ENCODE measurements at regions of chrX and their contacts with region 1.

Region 1: DNA sequence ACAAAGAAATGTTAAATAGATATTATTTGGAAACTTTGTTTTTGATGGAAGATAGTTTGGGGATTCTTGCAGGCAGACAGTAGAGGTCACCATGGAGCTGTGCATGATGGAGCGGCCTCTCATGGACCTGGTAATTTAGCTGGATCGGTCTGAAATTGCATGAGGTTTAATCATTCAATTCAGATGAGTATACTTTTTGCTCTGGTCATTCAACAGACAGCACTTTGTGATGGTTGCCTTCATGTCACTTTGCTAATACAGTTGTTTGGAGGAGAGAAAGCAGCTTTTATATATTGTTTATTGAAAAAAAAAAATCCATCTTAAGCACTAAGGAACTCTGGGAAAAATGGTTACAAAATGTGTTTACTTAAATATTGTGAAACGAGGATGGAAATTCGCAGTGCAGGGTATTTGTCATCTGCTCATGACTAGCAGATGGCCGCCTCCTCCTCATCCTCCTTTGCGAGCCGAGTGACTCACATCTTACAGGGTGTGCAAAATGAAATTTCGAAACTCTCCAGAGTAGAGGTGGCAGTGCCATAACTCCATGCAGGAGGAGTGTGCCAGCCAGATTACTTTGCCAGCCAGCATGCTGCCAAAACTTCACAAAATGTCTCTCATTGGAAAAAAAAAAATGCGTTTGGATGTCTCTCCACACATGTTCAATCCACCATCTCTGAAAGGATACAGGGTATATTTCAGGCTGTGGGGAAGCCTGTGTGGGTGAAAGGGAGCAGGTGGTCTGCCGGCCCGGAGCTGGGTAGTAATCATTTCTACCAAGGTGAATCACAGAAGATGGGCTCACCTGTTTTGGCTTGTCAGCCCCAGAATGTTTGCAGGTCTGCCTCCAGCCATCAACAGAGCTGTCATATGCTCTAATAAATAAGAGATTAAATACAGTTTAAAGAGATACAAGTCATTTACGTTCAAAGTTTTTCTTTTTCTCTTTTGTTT is 314.9 kb upstream of the DIPK2B start:
- DNase-seq: no peak

Region 2: DNA sequence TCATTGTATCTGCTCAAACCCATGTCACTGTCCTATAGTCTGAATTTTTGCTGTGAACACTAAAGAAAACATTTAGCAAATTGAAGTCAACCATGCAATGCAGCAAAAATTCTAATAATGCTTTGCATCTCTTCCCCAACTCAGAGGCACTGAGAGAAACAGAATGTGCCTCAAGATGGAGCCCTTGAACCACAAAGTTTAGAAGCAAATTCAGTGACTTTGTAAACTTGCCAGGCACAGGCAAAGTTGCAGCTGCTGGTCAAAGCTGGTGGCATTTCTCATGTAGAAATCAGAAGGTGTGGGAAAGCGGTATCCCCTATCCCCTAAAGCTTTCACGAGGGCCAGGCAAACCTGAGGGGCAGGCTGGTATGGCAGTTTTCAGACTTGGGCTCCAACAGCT is 193.2 kb before region 1 on chrX:
- intact Hi-C with region 1: loop called (anchors 5 kb)
- DNase-seq: no peak

Region 3: GRCh38 chrX:45422216-45422925 is 93.2 kb before region 1 on chrX:
- intact Hi-C with region 1: no loop called
- DNase-seq: no peak

Region 4: DNA sequence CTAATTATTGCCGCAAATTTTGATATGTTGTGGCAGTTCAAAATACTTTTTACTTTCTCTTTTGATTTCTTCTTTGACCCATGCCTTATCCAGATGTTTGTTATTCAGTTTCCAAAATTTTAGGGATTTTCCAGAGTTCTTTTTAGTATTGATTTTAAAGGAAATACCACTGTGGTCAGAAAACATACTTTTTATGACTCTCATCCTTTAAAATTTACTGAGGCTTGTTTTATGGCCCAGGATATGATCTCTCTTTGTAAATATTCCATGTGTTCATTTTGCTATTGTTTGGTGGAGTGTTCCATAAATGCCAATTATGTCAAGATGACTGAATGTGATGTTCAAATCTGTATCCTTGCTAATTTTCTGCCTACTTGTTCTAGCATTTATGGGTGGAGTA is 42.6 kb before region 1 on chrX:
- intact Hi-C with region 1: no loop called
- DNase-seq: no peak

Region 5: DNA sequence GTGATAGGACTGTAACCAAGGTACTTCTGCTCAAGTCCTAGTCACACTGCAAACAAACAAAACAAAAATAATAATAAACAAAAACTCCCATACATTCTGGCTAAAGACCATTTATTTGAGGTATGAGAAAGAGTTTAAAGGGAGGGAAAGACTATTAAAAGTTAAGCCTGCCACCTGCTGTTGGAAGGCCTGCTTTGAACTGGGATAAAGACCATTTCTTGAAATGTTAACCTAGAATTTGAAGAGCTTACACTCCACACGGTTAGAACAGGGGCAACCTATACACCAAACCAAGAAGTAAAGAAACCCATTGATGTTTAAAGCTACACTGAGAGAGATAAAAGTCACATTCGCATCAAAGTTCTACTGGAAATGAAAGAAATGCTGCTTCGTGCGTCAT is 233.8 kb after region 1 on chrX:
- intact Hi-C with region 1: loop called (anchors 5 kb)
- DNase-seq: no peak

Region 6: DNA sequence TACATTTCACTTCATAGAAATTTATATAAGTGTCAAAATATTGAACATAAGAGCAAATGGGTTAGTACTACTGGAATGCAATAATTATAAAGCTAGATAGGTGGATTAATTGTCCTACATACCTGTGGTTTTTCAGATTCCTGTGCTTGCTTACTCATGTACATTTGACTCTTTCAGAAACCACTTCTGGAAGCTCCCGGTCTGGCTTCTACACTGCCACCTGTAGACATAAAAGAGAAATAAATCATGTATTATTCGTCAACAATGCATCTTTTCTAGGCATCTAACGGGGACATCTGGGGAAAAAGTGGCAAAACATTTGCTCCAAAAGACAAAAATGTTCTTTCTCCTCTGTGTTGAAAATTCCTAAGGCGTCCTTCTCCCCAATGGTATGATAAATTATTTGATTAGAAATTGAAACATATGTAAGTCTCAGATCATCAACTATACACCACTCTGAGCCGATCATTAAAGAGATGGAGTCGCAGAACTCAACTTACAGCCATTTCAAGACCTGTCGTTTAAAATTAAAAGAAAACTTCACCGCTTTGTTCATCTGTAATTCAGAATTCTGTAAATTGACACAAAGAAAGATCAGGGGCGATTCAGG is 333.8 kb after region 1 on chrX:
- intact Hi-C with region 1: loop called (anchors 10 kb)
- DNase-seq: no peak

Region 7: DNA sequence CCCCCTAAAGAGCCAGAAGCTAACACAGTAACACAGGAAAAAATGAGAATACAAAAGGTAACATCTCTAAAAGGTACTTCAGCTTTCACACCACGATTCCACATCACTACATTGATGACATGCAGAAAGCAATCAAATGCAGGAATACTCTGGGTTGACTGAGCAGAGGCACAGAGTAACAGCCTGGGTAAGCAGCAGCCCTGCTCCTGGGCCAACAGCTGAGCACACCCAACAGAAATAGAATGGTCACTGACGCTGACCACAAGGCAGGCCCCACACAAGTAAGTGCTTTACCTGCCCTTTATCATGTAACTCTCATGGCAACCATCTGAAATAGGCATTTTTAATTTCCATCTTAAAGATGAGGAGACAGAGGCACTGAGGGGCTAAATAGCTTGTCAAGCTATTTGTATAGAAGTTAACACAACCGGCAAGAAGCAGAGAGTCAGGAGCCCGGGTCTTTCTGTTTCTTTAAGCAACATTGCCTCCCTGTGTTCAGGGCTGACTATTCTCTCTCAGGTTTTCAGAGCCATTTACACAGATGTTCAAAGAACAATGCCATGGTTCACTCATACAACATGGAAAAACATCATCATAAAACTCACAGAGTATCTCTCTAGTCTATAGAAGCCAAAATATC is 860.8 kb after region 1 on chrX:
- intact Hi-C with region 1: loop called (anchors 10 kb)
- DNase-seq: no peak

Region 8: GRCh38 chrX:46408553-46409407 is 893.2 kb after region 1 on chrX:
- intact Hi-C with region 1: loop called (anchors 10 kb)
- DNase-seq: no peak